ENCODE measurements at regions of chrX and their contacts with region 1.

Region 1: DNA sequence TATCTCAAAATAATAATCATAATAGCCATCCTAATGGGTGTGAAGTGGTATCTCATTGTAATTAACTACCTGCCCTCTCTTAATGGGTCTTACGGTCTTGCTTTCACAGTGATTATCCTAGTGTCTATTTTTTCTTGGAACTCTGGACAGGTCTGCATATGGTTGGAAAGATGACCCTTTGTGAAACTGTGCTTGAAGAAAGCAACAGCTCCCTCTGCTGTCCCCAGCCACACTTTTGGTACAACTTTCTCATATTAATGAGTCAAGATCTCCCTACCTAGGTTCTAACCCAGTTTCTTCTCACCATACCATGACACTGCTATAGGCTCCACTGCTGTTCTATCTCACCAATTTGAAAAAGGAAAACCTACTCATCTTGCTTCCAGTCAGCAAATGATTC is 2.4 kb downstream of the TFDP3 start:
- DNase-seq: no peak

Region 2: DNA sequence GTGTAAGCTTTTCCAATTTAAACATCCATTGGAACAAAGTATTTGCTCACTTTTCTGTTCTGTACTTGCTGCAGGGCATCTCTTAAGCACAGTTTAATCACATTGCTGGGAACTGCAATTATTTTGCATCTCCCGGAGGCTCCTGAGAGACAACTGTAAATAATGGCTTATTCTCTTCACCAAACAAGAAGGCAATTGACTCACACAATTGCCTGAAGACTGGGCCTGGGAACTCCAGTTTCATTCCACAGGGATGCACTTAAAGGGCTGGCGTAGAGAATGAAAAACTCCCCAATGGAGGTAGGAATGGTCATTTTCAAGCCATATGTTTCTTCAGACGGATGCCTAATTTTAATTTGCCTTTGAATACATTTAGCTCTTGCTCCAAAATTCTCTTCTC is 27.1 kb before region 1 on chrX:
- intact Hi-C with region 1: loop called in 1 of 2 experiments (anchors 1 kb)
- DNase-seq: no peak